Activated T-helper 1 cell treated with anti-CD3 and anti-CD28 coated beads, Interleukin-12 subunit alpha, Interleukin-12 subunit beta, Interleukin-2, Interleukin-4 antibody, amounts not matched to agents 30 ng/mL and 10 ng/mL and 1 ng/mL, durations not matched to agents 14 hours and 24 hours and 36 hours (primary cell): ENCODE measurements at regions of chr2 and their contacts with region 1.

Region 1: GRCh38 chr2:27489498-27490397 is at the start of gene IFT172:
- DNase-seq: peak; percentile 98
- H3K4me3 Mint-ChIP-seq: peak within 1 kb of the TSS; percentile 91
- H3K27ac Mint-ChIP-seq: peak within 1 kb of the TSS; percentile 91
- H3K4me1 Mint-ChIP-seq: peaks cover 22% of the 10 kb centered on the region
- H3K27me3 Mint-ChIP-seq: peaks cover 13% of the 10 kb centered on the region
- total RNA-seq, gene IFT172: 13.4 and 13.5 TPM in 2 replicates

Region 2: DNA sequence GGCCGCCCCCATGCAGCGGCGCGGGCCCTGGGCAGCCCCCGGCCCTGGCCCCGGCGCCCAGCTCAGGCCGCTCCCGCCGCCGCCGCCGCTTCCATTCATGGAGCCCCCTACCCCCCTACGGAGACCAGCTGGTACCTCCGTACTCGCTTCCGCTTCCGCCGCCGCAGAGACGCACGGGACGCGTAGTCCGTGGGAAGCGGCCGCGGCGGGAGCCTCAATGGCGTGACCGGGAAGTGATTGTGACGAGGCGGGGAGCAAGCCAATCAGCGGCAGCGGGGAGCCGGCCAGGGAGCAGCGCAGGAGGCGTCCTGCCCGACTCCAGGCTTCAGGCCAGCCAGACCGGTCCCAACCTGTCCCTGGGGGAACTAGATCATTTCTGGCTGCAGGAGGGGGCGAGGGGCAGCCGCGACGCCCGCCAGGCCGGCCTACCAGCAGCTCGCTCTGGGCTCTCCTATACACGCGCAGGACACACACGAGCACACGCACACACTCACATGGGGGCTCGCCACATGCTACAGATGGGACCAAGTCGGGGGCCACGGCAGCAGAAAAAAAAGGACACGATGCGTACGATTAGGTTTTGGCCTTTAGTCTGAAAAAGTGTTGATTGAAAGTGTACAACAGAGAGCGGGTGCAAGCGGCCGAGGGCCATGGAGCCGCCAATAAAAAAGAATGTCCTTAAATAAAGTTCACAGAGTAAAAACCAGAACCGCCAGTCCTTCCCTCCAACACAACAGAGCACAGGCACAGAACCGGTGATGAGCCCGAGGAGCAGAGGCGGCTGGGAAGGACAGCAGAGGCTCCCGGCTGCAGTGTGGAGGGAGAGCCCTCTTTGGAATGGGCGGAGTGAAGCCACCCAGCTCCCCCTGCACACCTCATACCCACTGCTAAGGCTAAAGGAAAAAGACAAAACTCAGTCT is 108.9 kb before region 1 on chr2 and contains the start of gene ZNF513:
- intact Hi-C with region 1: loop called (anchors 1 kb)
- DNase-seq: peak; percentile 87
- H3K4me3 Mint-ChIP-seq: peak within 1 kb of the TSS; percentile 92
- H3K27ac Mint-ChIP-seq: peak within 1 kb of the TSS; percentile 96
- H3K4me1 Mint-ChIP-seq: peaks cover 20% of the 10 kb centered on the region
- H3K27me3 Mint-ChIP-seq: no peaks in the 10 kb centered on the region
- total RNA-seq, gene ZNF513: 14.5 and 16.2 TPM in 2 replicates

Region 3: DNA sequence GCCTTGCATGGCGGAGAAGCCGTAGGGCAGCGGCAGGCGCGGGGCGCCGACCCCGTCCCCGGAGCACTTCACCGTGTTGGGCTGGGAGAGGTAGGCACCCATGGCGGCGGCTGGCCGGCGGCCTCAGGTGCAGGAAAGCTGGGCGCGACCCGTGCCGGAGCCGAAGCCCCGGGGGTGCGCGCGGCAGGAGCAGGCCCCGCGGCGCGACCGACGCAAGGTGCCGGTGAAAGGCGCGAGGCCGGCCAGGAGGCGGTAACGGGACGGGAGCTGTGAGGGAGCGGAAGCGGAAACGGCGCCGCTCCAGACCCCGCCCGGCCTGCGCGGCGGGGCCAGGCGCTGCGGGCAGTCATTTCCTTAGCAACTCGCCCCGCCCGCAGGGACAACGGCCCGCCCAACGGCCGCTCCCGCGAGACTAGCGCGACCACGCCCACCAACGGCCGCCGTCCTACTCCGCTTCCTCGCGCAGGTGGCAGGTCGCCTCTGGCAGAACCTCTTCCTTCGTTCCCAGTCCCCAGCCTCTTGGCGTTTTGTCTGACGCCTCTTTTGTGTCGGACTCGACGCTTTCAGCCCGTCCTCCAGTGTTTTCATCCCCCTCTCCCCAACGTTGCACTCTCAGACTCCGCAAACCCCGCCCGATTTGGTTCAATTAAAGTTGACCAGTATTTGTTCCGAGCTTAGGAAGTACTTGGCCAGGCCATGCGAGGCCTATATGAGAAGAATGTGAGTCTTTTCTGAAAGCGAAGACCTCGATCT is 80.3 kb before region 1 on chr2 and contains the start of gene PPM1G:
- intact Hi-C with region 1: loop called (anchors 1 kb)
- DNase-seq: peak; percentile 95
- H3K4me3 Mint-ChIP-seq: peak within 1 kb of the TSS; percentile 90
- H3K27ac Mint-ChIP-seq: peak within 1 kb of the TSS; percentile 89
- H3K4me1 Mint-ChIP-seq: peaks cover 29% of the 10 kb centered on the region
- H3K27me3 Mint-ChIP-seq: peaks cover 2% of the 10 kb centered on the region
- total RNA-seq, gene PPM1G: 158 and 160 TPM in 2 replicates

Region 4: DNA sequence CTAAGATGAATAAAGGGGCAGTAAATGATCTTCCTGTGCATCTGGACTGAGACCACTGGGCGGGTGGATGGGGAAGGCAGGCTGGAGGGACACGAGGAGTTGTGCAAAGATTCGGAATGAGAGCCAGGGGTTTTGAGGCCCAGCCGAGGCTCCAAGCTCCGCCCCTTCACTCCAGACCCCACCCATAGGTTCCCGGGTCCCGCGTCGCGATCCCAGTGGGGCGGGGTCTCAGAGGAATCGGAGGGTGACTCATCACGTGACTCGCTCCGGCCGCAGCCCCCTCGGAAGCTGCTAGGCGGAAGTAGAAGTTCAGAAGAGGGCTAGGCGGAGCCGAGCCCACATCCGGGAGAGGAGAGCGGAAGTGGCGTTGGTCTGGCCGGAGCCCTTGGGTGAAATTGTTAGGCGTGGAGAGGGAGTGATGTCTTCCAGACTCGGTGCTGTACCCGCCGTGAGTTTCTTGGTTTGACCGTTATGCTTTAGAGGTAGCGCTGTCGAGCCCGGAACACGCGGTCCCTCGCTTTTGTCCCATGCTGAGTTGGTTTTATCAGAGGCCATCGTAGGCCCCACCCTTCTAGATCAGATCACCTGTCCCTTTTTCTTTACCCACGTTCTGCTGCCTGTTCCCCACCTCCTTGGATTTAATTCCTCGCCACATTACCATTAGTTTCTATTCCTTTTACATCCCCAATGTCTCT is 93.1 kb after region 1 on chr2 and contains the start of gene ZNF512:
- intact Hi-C with region 1: loop called (anchors 1 kb)
- DNase-seq: peak; percentile 75
- H3K4me3 Mint-ChIP-seq: peak within 1 kb of the TSS; percentile 86
- H3K27ac Mint-ChIP-seq: peak within 1 kb of the TSS; percentile 79
- H3K4me1 Mint-ChIP-seq: peaks cover 45% of the 10 kb centered on the region
- H3K27me3 Mint-ChIP-seq: peaks cover 7% of the 10 kb centered on the region
- total RNA-seq, gene ZNF512: 24.6 and 25.0 TPM in 2 replicates

Region 5: DNA sequence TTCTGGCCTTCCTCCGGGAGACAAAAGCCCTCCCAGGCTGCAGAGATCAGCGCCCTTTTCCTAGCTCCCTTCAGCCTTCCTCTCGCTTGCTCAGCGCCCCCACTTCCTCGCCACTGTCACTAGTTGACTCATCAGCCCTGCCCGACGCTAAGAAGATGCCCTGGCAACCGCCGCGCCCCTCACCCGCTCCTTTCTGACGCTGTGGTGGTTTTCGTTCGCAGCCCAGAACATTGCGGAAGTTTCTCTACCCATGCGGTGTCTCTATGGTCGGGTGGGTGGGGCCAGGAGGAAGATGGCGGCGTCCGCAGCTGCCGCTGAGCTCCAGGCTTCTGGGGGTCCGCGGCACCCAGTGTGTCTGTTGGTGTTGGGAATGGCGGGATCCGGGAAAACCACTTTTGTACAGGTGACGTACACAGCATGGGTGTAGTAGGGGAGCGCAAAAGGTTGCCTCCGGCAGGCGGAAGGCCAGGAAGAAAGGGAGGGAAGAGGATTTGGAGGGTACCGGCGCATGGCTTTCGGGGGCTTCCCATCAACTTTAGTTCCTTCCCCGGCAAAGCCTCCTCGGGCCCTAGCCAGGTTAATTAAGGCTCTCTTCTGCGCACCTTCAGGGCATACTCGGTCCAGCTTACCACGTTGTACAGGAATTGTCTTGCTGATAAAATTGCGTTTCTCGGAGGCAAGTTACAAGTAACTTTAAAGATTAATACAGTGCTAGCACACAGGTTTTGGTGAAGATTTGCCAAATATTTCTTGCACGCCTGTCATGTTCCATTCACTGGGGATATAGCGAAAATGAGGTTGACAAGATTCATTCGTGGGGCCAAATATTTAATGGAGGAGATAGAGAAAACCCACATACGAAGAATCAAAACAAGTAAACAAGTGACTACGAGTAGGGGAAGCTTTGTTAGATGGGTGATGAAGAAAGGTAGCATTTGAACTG is 139.3 kb after region 1 on chr2 and contains the starts of genes CCDC121 and GPN1:
- intact Hi-C with region 1: loop called (anchors 1 kb)
- DNase-seq: peak; percentile 93
- H3K4me3 Mint-ChIP-seq: no peak within 1 kb of the TSS
- H3K27ac Mint-ChIP-seq: peak within 1 kb of the TSS; percentile 73
- H3K4me1 Mint-ChIP-seq: peaks cover 20% of the 10 kb centered on the region
- H3K27me3 Mint-ChIP-seq: no peaks in the 10 kb centered on the region
- total RNA-seq, gene CCDC121: 0.66 and 1.3 TPM in 2 replicates
- total RNA-seq, gene GPN1: 48.3 and 51.0 TPM in 2 replicates

Region 6: GRCh38 chr2:27683390-27684071 is 193.8 kb after region 1 on chr2:
- intact Hi-C with region 1: loop called (anchors 1 kb)
- DNase-seq: peak; percentile 80
- H3K4me3 Mint-ChIP-seq: no peak overlapping the region
- H3K27ac Mint-ChIP-seq: peak overlapping the region; percentile 74
- H3K4me1 Mint-ChIP-seq: peaks cover 32% of the 10 kb centered on the region
- H3K27me3 Mint-ChIP-seq: no peaks in the 10 kb centered on the region